Mammary epithelial cell (primary cell): ENCODE measurements at regions of chr18 and their contacts with region 1.

Region 1: DNA sequence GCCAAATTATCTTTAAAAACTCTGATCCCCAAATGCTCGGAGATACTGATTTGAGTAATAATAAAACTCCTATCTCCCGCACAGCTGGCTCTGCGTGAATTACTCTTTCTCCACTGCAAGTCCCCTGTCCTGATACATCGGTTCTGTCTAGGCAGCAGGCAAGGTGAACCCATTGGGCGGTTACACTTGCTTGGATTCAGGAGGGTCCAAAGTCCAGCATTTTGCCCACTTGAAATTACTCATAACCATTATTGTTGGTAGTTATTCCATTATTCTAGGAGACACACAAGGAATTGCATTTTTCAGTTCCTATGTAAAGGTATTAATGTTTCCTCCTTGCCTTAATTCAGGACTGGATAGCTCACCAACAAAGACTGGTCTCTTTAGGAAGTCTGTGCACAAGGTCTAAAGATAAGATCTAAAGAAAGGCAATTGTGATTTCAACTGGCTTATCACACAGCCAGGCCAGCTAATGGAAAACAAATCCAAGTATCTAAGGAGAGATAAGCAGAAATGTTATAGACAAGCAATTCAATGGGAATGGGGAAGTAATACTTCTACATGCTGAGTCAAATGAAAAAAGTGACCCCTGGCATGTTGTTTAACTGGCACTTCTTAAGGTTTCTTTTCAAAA is 23.2 kb upstream of the NPC1 start:
- DNase-seq: no peak
- H3K4me3 ChIP-seq: no peak overlapping the region
- H3K27ac ChIP-seq: no peak overlapping the region
- H3K4me1 ChIP-seq: no peaks in the 10 kb centered on the region
- H3K27me3 ChIP-seq: peaks cover 2% of the 10 kb centered on the region
- CTCF ChIP-seq: no peak

Region 2: GRCh38 chr18:23225503-23225902 is 384.0 kb before region 1 on chr18:
- CTCF ChIA-PET with region 1: interaction called, 11 read pairs
- dilution Hi-C with region 1: no loop called
- in situ Hi-C with region 1: no loop called
- intact Hi-C with region 1: no loop called
- DNase-seq: no peak
- H3K4me3 ChIP-seq: no peak overlapping the region
- H3K27ac ChIP-seq: no peak overlapping the region
- H3K4me1 ChIP-seq: no peaks in the 10 kb centered on the region
- H3K27me3 ChIP-seq: no peaks in the 10 kb centered on the region
- CTCF ChIP-seq: no peak

Region 3: GRCh38 chr18:23648940-23649607 is 39.6 kb after region 1 on chr18:
- CTCF ChIA-PET with region 1: no interaction called
- dilution Hi-C with region 1: loop called (anchors 5 kb)
- in situ Hi-C with region 1: no loop called
- intact Hi-C with region 1: no loop called
- DNase-seq: no peak
- H3K4me3 ChIP-seq: no peak overlapping the region
- H3K27ac ChIP-seq: no peak overlapping the region
- H3K4me1 ChIP-seq: peaks cover 14% of the 10 kb centered on the region
- H3K27me3 ChIP-seq: no peaks in the 10 kb centered on the region
- CTCF ChIP-seq: no peak